Cardiac septum (tissue), 1 donor: ENCODE measurements at regions of chr6 and their contacts with region 1.

Region 1: DNA sequence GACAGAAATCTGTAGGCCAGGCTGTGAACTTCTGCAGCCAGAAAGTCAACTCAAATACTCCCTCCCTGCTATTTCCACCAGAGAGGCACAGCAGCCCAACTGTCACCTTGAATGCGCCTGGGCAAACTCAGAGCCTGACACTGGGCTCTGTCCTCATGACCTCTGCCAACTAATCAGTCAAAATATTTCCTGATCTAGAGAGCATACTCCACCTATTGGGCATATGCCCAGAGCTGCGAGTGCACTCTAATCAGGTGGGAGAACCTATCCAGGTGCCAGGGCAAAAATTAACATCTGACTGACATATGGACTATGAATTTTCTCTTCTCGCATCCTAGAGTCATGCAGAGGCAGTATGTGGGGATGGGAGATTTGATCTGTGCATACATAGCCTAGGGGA is 406.3 kb upstream of the RUNX2 start:
- DNase-seq: peak; percentile 81

Region 2: GRCh38 chr6:44304282-44305199 is 617.3 kb before region 1 on chr6:
- intact Hi-C with region 1: no loop called
- DNase-seq: no peak

Region 3: GRCh38 chr6:44966449-44967092 is 44.8 kb after region 1 on chr6:
- intact Hi-C with region 1: loop called (anchors 5 kb)
- DNase-seq: no peak

Region 4: GRCh38 chr6:44976719-44977641 is 55.2 kb after region 1 on chr6:
- intact Hi-C with region 1: no loop called
- DNase-seq: no peak